Right ventricle myocardium inferior (tissue), 1 donor: ENCODE measurements at regions of chr6 and their contacts with region 1.

Region 1: GRCh38 chr6:15691250-15691869 is 28.5 kb upstream of the DTNBP1 start:
- DNase-seq: peak; percentile 88
- ATAC-seq: peak; percentile 94

Region 2: GRCh38 chr6:15547400-15547799 is 144.0 kb before region 1 on chr6:
- intact Hi-C with region 1: no loop called
- DNase-seq: no peak
- ATAC-seq: no peak

Region 3: DNA sequence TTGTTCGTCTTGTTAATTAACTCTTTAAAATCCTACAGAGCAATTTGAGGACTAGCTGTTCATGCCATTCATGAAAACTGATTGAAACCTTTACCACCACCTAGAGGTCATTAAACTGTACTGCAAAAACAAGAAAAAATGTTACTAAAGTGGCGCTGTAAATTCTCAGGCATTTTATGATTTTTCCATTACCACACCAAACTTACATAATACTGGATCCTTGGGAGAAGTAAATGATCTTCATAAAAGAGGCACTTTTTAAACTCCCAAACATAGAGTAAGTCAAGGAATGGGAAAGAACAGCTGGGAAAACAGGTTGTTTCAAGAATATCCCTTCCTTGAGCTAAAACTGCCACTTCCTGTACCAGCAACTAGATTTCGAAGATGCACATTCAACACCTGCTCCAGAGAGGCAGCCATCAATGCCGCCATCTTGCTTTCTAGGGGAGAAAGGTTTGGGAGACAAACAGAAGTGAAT is 491.9 kb after region 1 on chr6:
- intact Hi-C with region 1: loop called (anchors 1 kb)
- DNase-seq: no peak
- ATAC-seq: no peak

Region 4: GRCh38 chr6:16205377-16206144 is 514.2 kb after region 1 on chr6:
- intact Hi-C with region 1: loop called (anchors 1 kb)
- DNase-seq: no peak
- ATAC-seq: peak; percentile 60